ENCODE measurements at regions of chr10 and their contacts with region 1.

Region 1: DNA sequence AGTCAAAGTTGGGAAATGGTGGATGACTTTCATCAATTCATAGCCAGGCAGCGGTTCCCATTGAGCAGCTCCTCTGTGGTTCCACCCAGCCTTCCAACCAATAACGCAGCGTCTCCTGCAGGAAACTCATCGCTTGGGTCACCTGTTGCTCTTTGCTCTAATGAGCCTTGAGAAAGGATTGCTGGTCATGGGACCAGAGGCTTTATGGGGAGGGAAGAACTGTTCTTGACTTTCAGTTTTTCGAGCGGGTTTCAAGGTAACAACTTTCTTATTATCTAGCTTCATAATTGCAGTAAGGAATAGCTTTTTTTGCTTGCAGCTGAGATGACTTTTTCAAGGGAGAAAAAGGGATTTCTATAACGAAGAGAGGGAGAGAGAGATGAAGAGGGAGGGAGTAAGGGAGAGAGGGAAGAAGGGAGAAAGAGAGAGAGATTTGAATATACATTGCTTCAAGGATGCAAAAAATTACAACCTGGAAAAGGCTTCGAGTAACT is 405 bp upstream of the ENTPD1 start:
- DNase-seq: no peak
- H3K4me3 ChIP-seq: peak overlapping the region; percentile 62
- H3K27ac ChIP-seq: peak overlapping the region; percentile 94
- H3K4me1 ChIP-seq: peaks cover 48% of the 10 kb centered on the region
- CTCF ChIP-seq: no peak

Region 2: DNA sequence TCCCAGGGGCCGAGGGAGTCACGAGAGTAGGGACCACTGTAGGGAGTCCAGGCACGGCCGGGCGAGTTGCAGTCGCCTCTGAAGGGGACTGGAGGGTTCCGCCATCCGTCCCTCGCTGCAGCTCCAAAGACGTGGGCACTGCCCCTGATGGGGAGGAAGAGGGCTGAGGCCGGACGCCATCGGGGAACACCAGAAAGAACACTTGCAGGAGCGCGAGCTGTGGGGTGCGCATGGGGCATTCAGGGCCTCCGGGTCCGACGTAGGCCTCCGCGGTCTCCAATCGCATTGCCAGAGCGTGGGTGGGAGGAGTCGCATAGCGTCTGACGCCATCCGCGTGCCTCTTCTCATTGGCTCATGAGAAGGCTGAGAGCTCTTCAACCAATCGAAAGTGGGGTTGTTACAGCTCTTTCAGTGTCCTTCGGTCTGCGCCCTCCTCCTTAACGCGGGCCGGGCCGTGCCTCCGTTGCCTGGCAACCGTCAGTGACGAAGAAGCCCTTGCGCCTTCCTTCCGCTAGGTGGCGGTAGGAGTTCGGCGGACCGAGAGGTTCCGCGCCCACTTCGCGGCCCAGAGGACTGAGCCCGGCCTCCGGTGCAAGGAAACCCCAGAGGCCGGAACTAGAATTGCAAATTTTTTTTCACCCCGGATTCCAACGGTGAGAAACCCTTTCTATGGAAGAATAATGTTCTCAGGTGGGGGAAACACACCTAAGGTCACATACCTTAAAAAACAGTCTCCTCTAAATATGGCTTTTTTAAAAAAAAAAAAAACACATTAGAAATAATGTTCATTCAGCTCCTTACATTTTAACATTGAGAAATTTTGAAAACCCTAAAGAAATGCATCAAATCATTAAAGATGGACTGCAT is 61.7 kb before region 1 on chr10 and contains the start of gene TCTN3:
- CTCF ChIA-PET with region 1: interaction called, 15 read pairs
- POLR2A ChIA-PET with region 1: interaction called, 15 read pairs
- intact Hi-C with region 1: loop called (anchors 1 kb)
- DNase-seq: peak; percentile 100
- H3K4me3 ChIP-seq: peak within 1 kb of the TSS; percentile 83
- H3K27ac ChIP-seq: no peak within 1 kb of the TSS
- H3K4me1 ChIP-seq: peaks cover 22% of the 10 kb centered on the region
- CTCF ChIP-seq: peak; percentile 98
- total RNA-seq, gene TCTN3: 9.6 and 10.4 TPM in 2 replicates

Region 3: GRCh38 chr10:95741807-95742467 is 13.6 kb before region 1 on chr10:
- CTCF ChIA-PET with region 1: no interaction called
- POLR2A ChIA-PET with region 1: interaction called, 26 read pairs
- intact Hi-C with region 1: loop called (anchors 2 kb)
- DNase-seq: peak; percentile 54
- H3K4me3 ChIP-seq: peak overlapping the region; percentile 39
- H3K27ac ChIP-seq: peak overlapping the region; percentile 41
- H3K4me1 ChIP-seq: peaks cover 29% of the 10 kb centered on the region
- CTCF ChIP-seq: peak; percentile 65

Region 4: DNA sequence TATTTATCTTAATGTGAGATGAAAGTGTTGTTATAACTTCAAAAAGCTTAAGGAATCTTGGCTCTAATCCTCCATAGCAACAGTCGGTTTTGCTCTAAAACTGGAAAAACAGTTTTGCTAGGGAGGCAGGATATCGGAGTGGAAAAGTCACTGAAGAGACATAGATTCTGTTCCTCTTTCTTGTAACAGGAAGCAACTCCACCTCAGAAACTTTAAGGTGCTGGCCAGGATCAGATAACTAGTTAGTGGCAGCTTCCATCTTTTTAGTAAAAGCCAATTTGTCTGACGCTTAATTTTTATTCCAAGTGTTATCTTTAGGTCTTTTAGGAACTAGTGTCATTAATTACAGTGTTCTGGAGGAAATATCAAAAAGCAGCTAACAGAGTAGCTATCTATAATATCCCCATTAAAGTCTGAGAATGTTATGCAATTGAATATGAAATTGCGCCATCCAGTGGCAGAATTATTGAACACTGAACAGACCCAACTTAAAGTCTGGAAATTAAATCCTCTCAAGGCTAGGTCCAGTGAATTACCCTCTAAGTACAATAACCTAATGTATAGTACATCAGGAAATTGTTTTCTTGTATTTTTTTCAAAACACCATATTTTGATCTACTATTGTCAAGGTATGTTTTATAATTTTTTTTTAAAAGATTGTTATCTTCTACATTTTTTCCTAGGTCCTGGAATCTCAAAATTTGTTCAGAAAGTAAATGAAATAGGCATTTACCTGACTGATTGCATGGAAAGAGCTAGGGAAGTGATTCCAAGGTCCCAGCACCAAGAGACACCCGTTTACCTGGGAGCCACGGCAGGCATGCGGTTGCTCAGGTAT is 86.3 kb after region 1 on chr10:
- CTCF ChIA-PET with region 1: interaction called, 4 read pairs
- POLR2A ChIA-PET with region 1: interaction called, 16 read pairs
- intact Hi-C with region 1: loop called (anchors 1 kb)
- DNase-seq: peak; percentile 83
- H3K4me3 ChIP-seq: peak overlapping the region; percentile 13
- H3K27ac ChIP-seq: peak overlapping the region; percentile 13
- H3K4me1 ChIP-seq: peaks cover 45% of the 10 kb centered on the region
- CTCF ChIP-seq: peak; percentile 100

Region 5: DNA sequence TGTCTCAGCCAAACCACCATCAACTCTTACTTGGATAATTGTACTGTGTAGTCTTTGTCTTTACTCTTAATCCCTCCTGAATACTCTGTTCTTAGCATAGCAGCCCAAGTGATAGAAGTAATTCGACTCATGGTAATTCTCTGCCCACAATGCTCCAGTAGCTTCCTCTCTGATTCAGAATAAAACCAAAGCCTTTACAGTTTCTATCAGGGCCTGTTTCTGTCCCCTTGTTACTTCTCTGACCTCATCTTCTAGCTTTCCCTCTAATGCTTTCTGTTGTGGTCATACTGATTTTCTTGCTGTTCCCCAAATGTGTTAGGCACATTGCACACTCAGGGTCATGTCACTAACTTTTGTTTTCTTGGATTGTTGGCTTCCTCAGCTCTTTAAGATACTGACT is 382.5 kb after region 1 on chr10:
- CTCF ChIA-PET with region 1: no interaction called
- POLR2A ChIA-PET with region 1: no interaction called
- intact Hi-C with region 1: no loop called
- DNase-seq: no peak
- H3K4me3 ChIP-seq: no peak overlapping the region
- H3K27ac ChIP-seq: no peak overlapping the region
- H3K4me1 ChIP-seq: no peaks in the 10 kb centered on the region
- CTCF ChIP-seq: no peak

Region 6: DNA sequence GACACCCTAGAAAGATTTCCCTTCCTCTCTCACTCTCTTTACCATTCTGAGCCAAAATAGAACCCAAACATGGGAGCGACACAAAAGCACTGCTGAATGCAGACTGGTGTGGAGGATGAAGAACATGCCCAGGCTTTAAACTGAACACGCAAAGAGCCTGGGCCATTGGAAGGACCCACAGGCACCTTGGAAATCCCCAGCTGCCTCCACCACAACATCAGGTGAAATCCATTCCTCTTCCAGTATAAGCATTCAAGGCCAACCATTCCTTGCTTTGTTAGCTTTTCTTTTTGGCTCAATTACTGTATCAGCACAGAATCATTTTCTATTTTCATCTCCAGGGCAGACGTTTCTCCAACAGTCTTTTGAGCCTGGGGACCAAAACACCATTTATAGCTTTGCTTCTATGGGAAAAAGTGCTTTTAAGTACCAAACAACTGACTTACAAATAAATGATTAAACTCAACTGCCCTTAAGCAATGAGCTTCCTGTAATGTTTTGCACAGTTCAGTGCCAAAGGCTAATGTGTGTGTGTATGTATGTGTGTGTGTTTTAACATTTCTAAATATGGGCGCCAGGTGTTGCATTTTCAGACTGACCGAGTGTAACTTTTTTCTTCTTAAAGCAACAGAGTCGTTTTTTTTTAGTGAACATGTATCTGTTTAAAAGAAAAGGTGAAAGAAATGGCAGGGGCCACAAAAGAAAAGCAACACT is 532.0 kb after region 1 on chr10:
- CTCF ChIA-PET with region 1: no interaction called
- POLR2A ChIA-PET with region 1: interaction called, 3 read pairs
- intact Hi-C with region 1: loop called (anchors 5 kb)
- DNase-seq: peak; percentile 96
- H3K4me3 ChIP-seq: peak overlapping the region; percentile 63
- H3K27ac ChIP-seq: peak overlapping the region; percentile 98
- H3K4me1 ChIP-seq: peaks cover 90% of the 10 kb centered on the region
- CTCF ChIP-seq: no peak